CD8-positive, alpha-beta T cell (primary cell): ENCODE measurements at regions of chr13 and their contacts with region 1.

Region 1: DNA sequence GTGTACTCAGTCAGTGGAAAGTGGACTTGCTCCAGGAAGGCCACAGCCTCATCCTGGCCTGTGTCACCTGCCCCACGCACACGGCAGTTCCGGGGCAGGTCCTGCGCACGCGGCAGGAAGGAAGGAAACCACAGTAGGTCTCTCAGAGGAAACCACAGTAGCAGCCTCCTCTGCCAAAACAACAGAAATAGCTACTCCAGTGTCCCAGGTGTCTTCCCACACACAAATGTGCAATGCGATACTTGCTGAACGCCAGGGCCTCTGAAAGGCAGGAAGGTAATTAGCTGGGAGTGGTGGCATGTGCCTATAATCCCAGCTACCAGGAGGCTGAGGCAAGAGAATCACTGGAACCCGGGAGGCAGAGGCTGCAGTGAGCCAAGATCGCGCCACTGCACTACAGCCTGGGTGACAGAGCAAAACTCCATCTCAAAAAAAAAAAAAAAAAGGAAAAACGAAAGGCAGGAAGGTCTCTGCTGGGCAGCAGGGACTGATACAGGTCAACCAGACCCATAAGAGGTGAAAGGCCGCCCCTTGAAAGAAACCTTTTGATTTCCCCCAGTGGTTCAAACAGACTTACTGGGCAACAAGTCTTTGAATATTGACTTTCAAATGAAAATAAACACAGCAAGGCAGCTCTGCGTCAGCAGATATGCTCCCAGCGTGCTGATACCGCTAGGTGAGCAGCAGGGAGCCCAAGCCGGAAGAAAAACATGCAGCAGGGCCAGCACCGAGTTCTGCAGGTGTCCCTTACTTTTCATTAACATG is 49.5 kb downstream of the CRYL1 start:
- DNase-seq: peak; percentile 48 to 92 (median 69)
- ATAC-seq: peak; percentile 88
- H3K4me3 ChIP-seq: peak overlapping the region; percentile 9 to 52
- H3K4me3 Mint-ChIP-seq: peak overlapping the region; percentile 81
- H3K27ac ChIP-seq: peak overlapping the region; percentile 48 to 91
- H3K27ac Mint-ChIP-seq: peak overlapping the region; percentile 98
- H3K4me1 ChIP-seq: peaks cover 34% of the 10 kb centered on the region
- H3K4me1 Mint-ChIP-seq: peaks cover 63% of the 10 kb centered on the region
- H3K27me3 ChIP-seq: no peaks in the 10 kb centered on the region
- H3K27me3 Mint-ChIP-seq: no peaks in the 10 kb centered on the region
- CTCF ChIP-seq: no peak

Region 2: GRCh38 chr13:20197361-20197834 is 278.7 kb before region 1 on chr13:
- CTCF ChIA-PET with region 1: interaction called, 5 read pairs
- POLR2A ChIA-PET with region 1: no interaction called
- intact Hi-C with region 1: loop called (anchors 5 to 10 kb)
- DNase-seq: peak in 4 of 9 experiments; percentile 24 to 71 (median 46)
- ATAC-seq: peak; percentile 76
- H3K4me3 ChIP-seq: no peak overlapping the region
- H3K4me3 Mint-ChIP-seq: no peak overlapping the region
- H3K27ac ChIP-seq: no peak overlapping the region
- H3K27ac Mint-ChIP-seq: no peak overlapping the region
- H3K4me1 ChIP-seq: peaks cover 16% of the 10 kb centered on the region
- H3K4me1 Mint-ChIP-seq: peaks cover 18% of the 10 kb centered on the region
- H3K27me3 ChIP-seq: peaks cover 21 to 38% of the 10 kb centered on the region in 2 experiments
- H3K27me3 Mint-ChIP-seq: peaks cover 42% of the 10 kb centered on the region
- CTCF ChIP-seq: peak; percentile 78

Region 3: GRCh38 chr13:20411638-20412360 is 64.3 kb before region 1 on chr13:
- CTCF ChIA-PET with region 1: no interaction called
- POLR2A ChIA-PET with region 1: no interaction called
- intact Hi-C with region 1: loop called in 1 of 2 experiments (anchors 2 kb)
- DNase-seq: peak in 5 of 9 experiments; percentile 12 to 68 (median 39)
- ATAC-seq: peak; percentile 75
- H3K4me3 ChIP-seq: no peak overlapping the region
- H3K4me3 Mint-ChIP-seq: peak overlapping the region; percentile 42
- H3K27ac ChIP-seq: no peak overlapping the region
- H3K27ac Mint-ChIP-seq: peak overlapping the region; percentile 50
- H3K4me1 ChIP-seq: peaks cover 24% of the 10 kb centered on the region
- H3K4me1 Mint-ChIP-seq: peaks cover 19% of the 10 kb centered on the region
- H3K27me3 ChIP-seq: no peaks in the 10 kb centered on the region
- H3K27me3 Mint-ChIP-seq: no peaks in the 10 kb centered on the region
- CTCF ChIP-seq: no peak

Region 4: GRCh38 chr13:20461481-20461859 is 14.6 kb before region 1 on chr13:
- CTCF ChIA-PET with region 1: no interaction called
- POLR2A ChIA-PET with region 1: no interaction called
- intact Hi-C with region 1: no loop called
- DNase-seq: no peak
- ATAC-seq: no peak
- H3K4me3 ChIP-seq: no peak overlapping the region
- H3K4me3 Mint-ChIP-seq: no peak overlapping the region
- H3K27ac ChIP-seq: no peak overlapping the region
- H3K27ac Mint-ChIP-seq: no peak overlapping the region
- H3K4me1 ChIP-seq: peaks cover 15% of the 10 kb centered on the region
- H3K4me1 Mint-ChIP-seq: peaks cover 26% of the 10 kb centered on the region
- H3K27me3 ChIP-seq: no peaks in the 10 kb centered on the region
- H3K27me3 Mint-ChIP-seq: no peaks in the 10 kb centered on the region
- CTCF ChIP-seq: no peak

Region 5: DNA sequence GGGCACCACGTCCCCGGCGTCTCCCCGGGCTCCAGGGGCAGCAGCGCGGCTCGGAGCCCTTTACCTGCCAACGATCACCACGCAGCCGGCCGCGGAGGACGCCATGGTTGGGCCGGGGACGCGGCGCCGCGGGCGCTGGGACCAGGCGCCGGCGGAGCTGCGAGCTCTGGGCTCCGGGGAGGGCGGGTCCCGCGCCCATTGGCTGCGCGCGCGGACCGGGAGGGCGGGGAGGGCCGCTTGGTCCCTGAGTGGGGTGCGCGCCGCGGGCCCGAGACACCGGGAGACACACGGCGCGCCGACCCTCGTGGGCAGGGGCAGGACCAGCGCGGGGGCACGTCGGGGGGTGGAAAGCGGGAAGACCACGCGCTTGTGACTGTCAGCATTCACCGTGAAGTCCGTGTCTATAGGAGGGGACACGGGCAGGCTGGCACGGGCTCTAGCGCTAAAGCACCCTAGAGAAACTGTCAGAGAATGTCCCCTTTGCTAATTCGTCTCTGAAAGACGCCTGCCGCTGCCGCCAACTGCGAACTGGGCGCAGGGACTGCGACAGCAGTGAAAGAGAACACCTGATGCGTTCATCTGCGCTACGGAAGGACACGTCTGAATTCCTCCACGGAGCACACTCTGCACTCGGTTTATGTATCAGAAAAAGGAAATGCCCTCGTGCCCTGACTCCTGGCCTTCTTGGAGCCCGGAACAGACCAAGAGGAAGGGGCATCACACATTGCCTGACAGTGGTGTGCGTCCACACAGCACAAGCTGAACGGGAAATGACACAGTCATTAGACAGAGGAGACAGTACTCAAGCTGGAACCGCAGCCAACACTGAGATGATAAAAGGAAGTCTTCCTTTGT is 49.8 kb after region 1 on chr13 and contains the start of gene CRYL1:
- CTCF ChIA-PET with region 1: interaction called, 3 read pairs
- POLR2A ChIA-PET with region 1: interaction called, 5 read pairs
- intact Hi-C with region 1: loop called (anchors 5 to 10 kb)
- DNase-seq: peak; percentile 46 to 86 (median 74)
- ATAC-seq: peak; percentile 89
- H3K4me3 ChIP-seq: peak within 1 kb of the TSS; percentile 78 to 81
- H3K4me3 Mint-ChIP-seq: peak within 1 kb of the TSS; percentile 96
- H3K27ac ChIP-seq: peak within 1 kb of the TSS; percentile 75 to 87
- H3K27ac Mint-ChIP-seq: peak within 1 kb of the TSS; percentile 96
- H3K4me1 ChIP-seq: peaks cover 17% of the 10 kb centered on the region
- H3K4me1 Mint-ChIP-seq: peaks cover 22% of the 10 kb centered on the region
- H3K27me3 ChIP-seq: no peaks in the 10 kb centered on the region
- H3K27me3 Mint-ChIP-seq: peaks cover 7% of the 10 kb centered on the region
- CTCF ChIP-seq: no peak
- total RNA-seq, gene CRYL1: 8.0 to 8.5 TPM

Region 6: GRCh38 chr13:20566898-20567874 is 91.1 kb after region 1 on chr13 and contains the start of gene IFT88:
- CTCF ChIA-PET with region 1: no interaction called
- POLR2A ChIA-PET with region 1: interaction called, 4 read pairs
- intact Hi-C with region 1: loop called in 1 of 2 experiments (anchors 1 kb)
- DNase-seq: peak; percentile 49 to 90 (median 80)
- ATAC-seq: peak; percentile 86
- H3K4me3 ChIP-seq: peak within 1 kb of the TSS; percentile 70 to 71
- H3K4me3 Mint-ChIP-seq: peak within 1 kb of the TSS; percentile 87
- H3K27ac ChIP-seq: peak within 1 kb of the TSS; percentile 70 to 77
- H3K27ac Mint-ChIP-seq: peak within 1 kb of the TSS; percentile 89
- H3K4me1 ChIP-seq: no peaks in the 10 kb centered on the region
- H3K4me1 Mint-ChIP-seq: peaks cover 17% of the 10 kb centered on the region
- H3K27me3 ChIP-seq: no peaks in the 10 kb centered on the region
- H3K27me3 Mint-ChIP-seq: no peaks in the 10 kb centered on the region
- CTCF ChIP-seq: no peak
- total RNA-seq, gene IFT88: 7.5 to 8.2 TPM

Region 7: GRCh38 chr13:20579191-20579590 is 103.1 kb after region 1 on chr13:
- CTCF ChIA-PET with region 1: no interaction called
- POLR2A ChIA-PET with region 1: no interaction called
- intact Hi-C with region 1: no loop called
- DNase-seq: no peak
- ATAC-seq: no peak
- H3K4me3 ChIP-seq: no peak overlapping the region
- H3K4me3 Mint-ChIP-seq: no peak overlapping the region
- H3K27ac ChIP-seq: no peak overlapping the region
- H3K27ac Mint-ChIP-seq: no peak overlapping the region
- H3K4me1 ChIP-seq: no peaks in the 10 kb centered on the region
- H3K4me1 Mint-ChIP-seq: no peaks in the 10 kb centered on the region
- H3K27me3 ChIP-seq: no peaks in the 10 kb centered on the region
- H3K27me3 Mint-ChIP-seq: no peaks in the 10 kb centered on the region
- CTCF ChIP-seq: no peak

Region 8: GRCh38 chr13:20902438-20903163 is 426.5 kb after region 1 on chr13 and contains the start of gene XPO4:
- CTCF ChIA-PET with region 1: no interaction called
- POLR2A ChIA-PET with region 1: no interaction called
- intact Hi-C with region 1: loop called in 1 of 2 experiments (anchors 1 kb)
- DNase-seq: peak; percentile 55 to 88 (median 75)
- ATAC-seq: peak; percentile 96
- H3K4me3 ChIP-seq: peak within 1 kb of the TSS; percentile 81 to 89
- H3K4me3 Mint-ChIP-seq: peak within 1 kb of the TSS; percentile 94
- H3K27ac ChIP-seq: peak within 1 kb of the TSS; percentile 80 to 83
- H3K27ac Mint-ChIP-seq: peak within 1 kb of the TSS; percentile 93
- H3K4me1 ChIP-seq: peaks cover 11% of the 10 kb centered on the region
- H3K4me1 Mint-ChIP-seq: peaks cover 31% of the 10 kb centered on the region
- H3K27me3 ChIP-seq: no peaks in the 10 kb centered on the region
- H3K27me3 Mint-ChIP-seq: no peaks in the 10 kb centered on the region
- CTCF ChIP-seq: no peak
- total RNA-seq, gene XPO4: 23.8 to 24.5 TPM